Activated naive CD4-positive, alpha-beta T cell treated with anti-CD3 and anti-CD28 coated beads, Interleukin-2, amount 10 ng/mL, durations not matched to agents 7 days and 5 days (primary cell): ENCODE measurements at regions of chr1 and their contacts with region 1.

Region 1: DNA sequence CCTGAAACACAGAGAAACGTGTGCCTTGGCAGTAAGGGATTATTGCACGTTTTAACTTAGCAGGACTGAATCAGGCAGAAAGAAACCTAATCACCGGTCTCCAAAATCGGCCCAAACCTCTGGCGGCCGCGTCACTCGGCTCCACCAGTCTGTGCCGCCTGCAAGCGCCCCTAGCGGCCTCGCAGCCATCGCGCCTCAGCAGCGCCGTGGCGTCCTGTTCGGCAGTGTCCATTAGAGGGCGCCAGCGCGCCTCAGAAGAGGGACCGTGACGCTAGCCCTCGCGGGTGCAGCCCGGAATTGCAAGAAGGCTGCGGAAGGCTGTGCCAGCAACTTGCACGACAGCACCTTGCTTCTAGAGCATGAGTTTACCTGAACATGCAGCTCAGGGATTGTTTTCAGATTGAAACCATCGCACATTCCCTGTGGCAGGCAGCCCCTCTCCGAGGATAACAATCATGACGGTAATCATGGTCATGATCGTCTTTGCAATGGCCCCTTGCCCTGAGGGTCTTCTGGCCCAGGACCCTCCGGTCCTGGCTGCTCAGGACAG is 164.4 kb downstream of the TRIM33 start:
- DNase-seq: peak; percentile 97
- H3K4me3 Mint-ChIP-seq: peak overlapping the region; percentile 80
- H3K27ac Mint-ChIP-seq: peak overlapping the region; percentile 91
- H3K4me1 Mint-ChIP-seq: peaks cover 44% of the 10 kb centered on the region
- H3K27me3 Mint-ChIP-seq: peaks cover 12% of the 10 kb centered on the region

Region 2: GRCh38 chr1:114282751-114283403 is 63.7 kb before region 1 on chr1:
- CTCF ChIA-PET with region 1: interaction called, 10 read pairs
- DNase-seq: peak; percentile 91
- H3K4me3 Mint-ChIP-seq: no peak overlapping the region
- H3K27ac Mint-ChIP-seq: no peak overlapping the region
- H3K4me1 Mint-ChIP-seq: peaks cover 2% of the 10 kb centered on the region
- H3K27me3 Mint-ChIP-seq: peaks cover 12% of the 10 kb centered on the region

Region 3: DNA sequence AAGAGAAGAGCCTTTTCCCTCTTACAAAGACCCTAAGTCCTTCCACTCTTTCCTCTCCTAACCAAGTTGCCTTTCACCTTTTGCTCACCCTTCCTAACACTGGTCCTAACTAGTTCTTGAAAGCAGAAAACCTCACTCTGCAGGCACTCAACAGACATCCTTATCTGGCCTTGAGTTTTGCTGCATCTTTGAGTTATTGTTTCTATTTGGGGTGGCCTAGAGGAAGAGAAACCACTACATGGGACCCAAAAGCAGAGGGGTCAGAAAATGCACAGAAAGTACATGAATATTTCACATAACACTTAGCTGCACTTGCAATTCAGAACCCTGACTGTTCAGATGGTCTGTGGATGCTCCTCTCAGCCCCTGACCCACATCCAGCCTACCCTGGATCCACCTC is 14.6 kb before region 1 on chr1:
- CTCF ChIA-PET with region 1: interaction called, 10 read pairs
- DNase-seq: no peak
- H3K4me3 Mint-ChIP-seq: no peak overlapping the region
- H3K27ac Mint-ChIP-seq: peak overlapping the region; percentile 12
- H3K4me1 Mint-ChIP-seq: peaks cover 64% of the 10 kb centered on the region
- H3K27me3 Mint-ChIP-seq: no peaks in the 10 kb centered on the region

Region 4: DNA sequence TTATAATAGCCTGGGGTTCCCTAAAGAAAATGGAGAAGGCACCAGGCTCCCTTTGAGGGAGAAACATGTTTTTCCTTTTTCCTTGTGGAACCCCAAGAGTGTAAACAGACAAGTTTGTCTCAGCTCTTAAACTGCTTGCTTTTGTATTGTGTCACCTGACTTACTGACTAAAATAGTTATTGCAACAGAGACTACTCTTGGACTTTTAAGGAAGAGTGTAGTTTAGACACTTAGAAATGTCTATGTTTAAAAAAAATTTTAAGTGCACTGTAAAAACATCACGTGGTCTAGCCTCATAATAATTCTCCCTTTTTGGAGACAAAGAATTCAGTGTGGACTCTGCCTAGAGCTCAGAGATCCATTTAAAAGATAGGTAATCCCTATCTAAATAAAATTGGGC is 23.4 kb after region 1 on chr1:
- CTCF ChIA-PET with region 1: no interaction called
- DNase-seq: no peak
- H3K4me3 Mint-ChIP-seq: no peak overlapping the region
- H3K27ac Mint-ChIP-seq: no peak overlapping the region
- H3K4me1 Mint-ChIP-seq: no peaks in the 10 kb centered on the region
- H3K27me3 Mint-ChIP-seq: peaks cover 23% of the 10 kb centered on the region

Region 5: DNA sequence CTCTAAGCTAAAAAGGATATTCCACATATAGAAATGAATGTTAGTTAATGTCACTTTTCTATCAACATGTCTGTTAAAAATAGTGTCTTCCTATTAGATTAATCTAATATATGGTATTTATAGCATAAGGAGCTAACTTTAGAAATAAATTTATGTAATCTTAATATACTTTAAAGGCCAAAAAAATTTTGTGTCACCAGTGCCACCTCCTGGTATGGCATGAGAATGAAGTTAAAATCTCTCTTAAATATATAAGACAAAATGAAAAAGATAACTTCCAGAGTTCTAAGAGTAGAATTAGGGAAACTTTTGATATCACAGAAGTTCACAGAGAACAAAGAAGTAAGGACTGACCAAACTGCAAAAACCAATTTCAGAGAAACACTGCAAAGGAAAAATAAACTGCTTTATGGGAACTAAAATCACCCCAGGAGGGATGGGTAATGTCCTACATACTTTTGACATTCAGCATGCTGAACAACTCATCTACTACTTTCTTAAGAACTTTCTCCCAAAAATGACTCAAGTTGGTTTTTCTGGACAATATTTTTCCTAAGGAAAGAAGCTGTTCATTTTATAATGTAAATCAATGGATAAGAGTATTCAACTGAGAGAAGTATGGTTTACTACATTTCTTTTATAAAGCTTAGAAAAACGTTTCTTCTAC is 81.7 kb after region 1 on chr1:
- CTCF ChIA-PET with region 1: interaction called, 14 read pairs
- DNase-seq: peak; percentile 26
- H3K4me3 Mint-ChIP-seq: no peak overlapping the region
- H3K27ac Mint-ChIP-seq: peak overlapping the region; percentile 69
- H3K4me1 Mint-ChIP-seq: peaks cover 8% of the 10 kb centered on the region
- H3K27me3 Mint-ChIP-seq: no peaks in the 10 kb centered on the region

Region 6: DNA sequence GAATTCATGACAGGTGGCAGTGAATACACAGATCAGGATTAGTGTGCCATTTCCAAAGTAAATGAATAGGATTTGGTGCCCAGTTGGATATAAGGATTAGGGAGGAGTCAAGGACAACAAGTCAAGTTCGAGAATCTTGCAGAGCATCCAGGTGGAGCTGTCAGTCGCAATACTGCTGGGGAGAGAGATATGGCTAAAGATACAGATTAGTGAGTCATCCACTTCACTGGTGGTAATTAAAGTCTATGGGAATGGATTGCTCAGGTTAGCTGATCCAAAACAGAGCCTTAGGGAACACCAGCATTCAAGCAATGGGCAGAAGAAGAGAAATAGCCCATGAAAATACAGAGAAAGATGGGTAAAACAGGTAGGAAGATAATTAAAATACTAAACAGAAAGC is 208.0 kb after region 1 on chr1:
- CTCF ChIA-PET with region 1: interaction called, 14 read pairs
- DNase-seq: no peak
- H3K4me3 Mint-ChIP-seq: no peak overlapping the region
- H3K27ac Mint-ChIP-seq: no peak overlapping the region
- H3K4me1 Mint-ChIP-seq: no peaks in the 10 kb centered on the region
- H3K27me3 Mint-ChIP-seq: no peaks in the 10 kb centered on the region

Region 7: GRCh38 chr1:114670083-114671010 is 323.8 kb after region 1 on chr1:
- CTCF ChIA-PET with region 1: interaction called, 22 read pairs
- DNase-seq: peak; percentile 93
- H3K4me3 Mint-ChIP-seq: peak overlapping the region; percentile 91
- H3K27ac Mint-ChIP-seq: peak overlapping the region; percentile 69
- H3K4me1 Mint-ChIP-seq: peaks cover 13% of the 10 kb centered on the region
- H3K27me3 Mint-ChIP-seq: peaks cover 16% of the 10 kb centered on the region